SK-N-SH (cell line): ENCODE measurements at regions of chr2 and their contacts with region 1.

Region 1: DNA sequence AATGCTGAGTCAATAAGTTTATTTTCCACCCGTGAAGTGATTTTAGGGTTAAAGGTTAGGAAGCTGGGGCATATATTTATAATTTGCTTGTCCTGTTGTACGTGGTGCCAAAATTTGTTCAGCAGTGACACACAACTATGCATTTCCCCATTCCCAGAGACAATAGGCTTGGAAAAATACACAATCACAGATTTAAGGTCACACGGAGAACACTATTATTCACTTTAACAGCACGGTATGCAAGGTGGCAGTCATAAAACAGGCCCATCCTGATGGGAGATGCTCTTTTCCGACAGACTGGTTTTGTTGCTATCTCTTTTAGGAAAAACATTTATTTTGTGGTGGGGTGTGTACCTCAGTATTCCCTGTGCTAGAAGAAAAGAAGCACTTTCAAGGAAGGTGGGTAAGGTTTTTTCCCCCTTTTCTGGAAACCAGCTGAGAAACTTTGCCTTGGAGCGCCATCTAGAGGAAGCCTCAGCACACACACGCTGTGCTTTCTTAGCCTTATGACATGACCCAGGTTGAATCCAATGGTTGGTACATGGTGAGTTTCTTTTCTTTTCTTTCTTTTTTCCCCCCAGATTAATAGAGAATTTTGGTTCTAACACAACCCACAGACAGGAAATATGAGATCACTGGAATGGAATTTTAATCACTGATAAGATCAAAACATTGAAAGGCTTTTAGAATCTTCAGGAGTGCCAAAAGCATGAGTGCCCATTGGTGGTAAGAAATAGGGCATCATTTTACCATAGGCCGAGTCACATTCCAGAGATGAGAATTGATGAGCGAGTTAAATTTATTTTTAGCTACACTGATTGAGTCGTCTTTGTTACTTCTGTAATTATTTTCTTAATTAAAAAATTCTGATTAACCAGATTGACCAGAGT is 332.1 kb downstream of the AGPS start:
- DNase-seq: peak; percentile 60
- H3K4me3 ChIP-seq: peak overlapping the region in 1 of 2 experiments; percentile 53; a peak in 1 of 4 replicates
- H3K27ac ChIP-seq: no peak overlapping the region; a peak in 1 of 4 replicates
- H3K4me1 ChIP-seq: peaks cover 0 to 7% of the 10 kb centered on the region in 2 experiments; a peak in 1 of 4 replicates
- H3K27me3 ChIP-seq: no peaks in the 10 kb centered on the region
- CTCF ChIP-seq: peak; percentile 98
- EP300 ChIP-seq: no peak
- RAD21 ChIP-seq: peak; percentile 95

Region 2: GRCh38 chr2:177332041-177332991 is 392.3 kb before region 1 on chr2:
- CTCF ChIA-PET with region 1: interaction called, 27 read pairs
- POLR2A ChIA-PET with region 1: no interaction called
- DNase-seq: peak; percentile 46
- H3K4me3 ChIP-seq: no peak overlapping the region; a peak in 1 of 4 replicates
- H3K27ac ChIP-seq: peak overlapping the region; percentile 58 to 67
- H3K4me1 ChIP-seq: peaks cover 3 to 13% of the 10 kb centered on the region in 2 experiments; a peak in 3 of 4 replicates
- H3K27me3 ChIP-seq: no peaks in the 10 kb centered on the region
- CTCF ChIP-seq: peak; percentile 75
- EP300 ChIP-seq: no peak
- RAD21 ChIP-seq: peak; percentile 87

Region 3: DNA sequence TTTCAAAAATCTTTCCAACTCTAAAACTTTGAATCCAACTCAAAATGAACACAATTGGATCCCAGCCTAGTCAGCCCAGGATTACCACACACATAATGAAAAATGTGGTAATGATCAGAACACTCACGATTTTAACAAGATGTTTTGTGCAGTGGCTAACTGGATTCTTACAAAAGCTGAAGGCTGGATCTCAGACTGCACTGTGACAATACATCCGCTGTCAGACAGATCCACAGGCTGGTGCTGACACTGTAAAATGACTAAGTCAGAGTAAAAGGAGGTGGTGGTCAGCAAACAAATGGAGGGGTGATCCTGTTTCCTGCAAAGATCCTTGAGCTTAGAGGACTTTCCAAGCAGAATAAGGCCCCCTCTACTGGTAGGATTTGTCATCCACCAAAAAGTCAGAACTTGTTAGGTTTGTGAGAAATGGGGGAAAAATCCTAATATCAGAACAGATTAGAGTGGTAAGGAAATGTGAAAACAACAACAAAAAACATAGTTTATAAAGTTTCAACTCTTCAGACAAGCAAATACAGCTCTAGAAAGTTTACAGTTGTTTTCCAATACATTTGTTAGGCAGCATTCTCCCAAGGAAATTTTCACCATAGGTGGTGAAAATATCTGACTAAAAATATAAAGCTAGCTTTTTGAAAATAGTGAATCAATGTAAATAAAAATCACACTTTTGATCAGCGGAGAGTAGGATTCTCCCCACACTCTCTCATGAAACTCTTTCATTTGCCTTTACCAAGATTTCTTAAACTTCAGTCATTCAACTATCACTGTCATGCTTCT is 120.2 kb before region 1 on chr2:
- CTCF ChIA-PET with region 1: interaction called, 15 read pairs
- POLR2A ChIA-PET with region 1: no interaction called
- DNase-seq: peak; percentile 50
- H3K4me3 ChIP-seq: no peak overlapping the region; a peak in 1 of 4 replicates
- H3K27ac ChIP-seq: no peak overlapping the region; a peak in 1 of 4 replicates
- H3K4me1 ChIP-seq: peaks cover 2 to 9% of the 10 kb centered on the region in 2 experiments; a peak in 2 of 4 replicates
- H3K27me3 ChIP-seq: no peaks in the 10 kb centered on the region; the same call in 1 of the 2 replicates
- CTCF ChIP-seq: peak; percentile 72
- EP300 ChIP-seq: no peak
- RAD21 ChIP-seq: peak; percentile 79

Region 4: DNA sequence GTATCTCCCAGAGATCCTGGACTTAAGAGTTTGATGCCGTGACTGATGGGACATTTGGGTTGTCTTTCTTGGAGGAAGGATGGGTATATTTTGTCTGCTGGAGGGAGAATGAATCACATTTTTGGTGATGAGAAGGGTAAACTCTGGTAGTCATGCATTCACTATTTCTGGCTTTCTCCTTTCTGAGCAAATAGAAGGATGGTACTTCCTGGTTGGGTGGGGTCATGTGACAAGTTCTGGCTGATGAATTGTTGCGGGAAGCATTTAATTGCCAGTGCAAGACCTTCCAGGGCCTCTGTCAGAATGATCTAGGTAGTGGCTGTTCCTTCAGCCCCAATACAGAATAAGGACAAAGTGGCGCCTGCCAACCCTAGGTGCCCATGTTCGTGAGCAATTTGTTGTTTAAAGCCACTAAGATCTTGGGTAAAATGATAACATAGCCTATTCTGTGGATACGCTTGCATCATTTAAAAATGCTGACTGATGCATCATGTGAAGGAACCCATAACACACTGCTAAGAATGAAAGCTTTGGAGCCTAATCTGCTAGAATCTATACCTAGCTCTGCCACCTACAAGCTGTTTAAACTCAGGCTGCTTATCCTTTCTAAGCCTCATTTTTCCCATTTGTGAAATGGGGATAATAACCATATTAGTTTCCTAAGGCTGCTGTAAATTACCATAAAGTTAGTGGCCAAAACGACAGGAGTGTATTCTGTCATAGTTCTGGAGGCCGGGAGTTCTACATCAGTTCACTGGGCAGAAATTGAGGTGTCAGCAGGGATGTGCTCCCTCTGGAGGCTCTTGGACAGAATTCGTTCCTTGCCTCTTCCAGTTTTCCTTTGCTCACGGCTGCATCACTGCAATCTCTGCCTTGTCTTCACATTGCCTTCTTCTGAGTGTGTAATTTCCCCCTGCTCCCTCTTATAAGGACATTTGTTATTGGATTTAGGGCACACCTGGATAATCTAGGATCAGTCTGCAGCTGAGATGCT is 50.7 kb before region 1 on chr2:
- CTCF ChIA-PET with region 1: no interaction called
- POLR2A ChIA-PET with region 1: no interaction called
- DNase-seq: no peak
- H3K4me3 ChIP-seq: no peak overlapping the region
- H3K27ac ChIP-seq: no peak overlapping the region
- H3K4me1 ChIP-seq: peaks cover 0 to 9% of the 10 kb centered on the region in 2 experiments; a peak in 2 of 4 replicates
- H3K27me3 ChIP-seq: no peaks in the 10 kb centered on the region
- CTCF ChIP-seq: no peak
- EP300 ChIP-seq: no peak
- RAD21 ChIP-seq: no peak

Region 5: GRCh38 chr2:177740700-177741099 is 16.1 kb after region 1 on chr2:
- CTCF ChIA-PET with region 1: interaction called, 12 read pairs
- POLR2A ChIA-PET with region 1: no interaction called
- DNase-seq: peak; percentile 23
- H3K4me3 ChIP-seq: no peak overlapping the region
- H3K27ac ChIP-seq: no peak overlapping the region; a peak in 2 of 4 replicates
- H3K4me1 ChIP-seq: peaks cover 0 to 10% of the 10 kb centered on the region in 2 experiments; a peak in 1 of 4 replicates
- H3K27me3 ChIP-seq: no peaks in the 10 kb centered on the region
- CTCF ChIP-seq: no peak
- EP300 ChIP-seq: peak in 1 of 2 experiments; percentile 58; a peak in 1 of 4 replicates
- RAD21 ChIP-seq: no peak

Region 6: GRCh38 chr2:177763532-177764265 is 39.1 kb after region 1 on chr2:
- CTCF ChIA-PET with region 1: interaction called, 11 read pairs
- POLR2A ChIA-PET with region 1: no interaction called
- DNase-seq: peak; percentile 67
- H3K4me3 ChIP-seq: no peak overlapping the region
- H3K27ac ChIP-seq: no peak overlapping the region
- H3K4me1 ChIP-seq: peaks cover 0 to 4% of the 10 kb centered on the region in 2 experiments; a peak in 1 of 4 replicates
- H3K27me3 ChIP-seq: no peaks in the 10 kb centered on the region
- CTCF ChIP-seq: peak; percentile 78
- EP300 ChIP-seq: no peak
- RAD21 ChIP-seq: peak; percentile 54